Activated CD4-positive, alpha-beta T cell treated with anti-CD3 and anti-CD28 coated beads for 36 hours (primary cell): ENCODE measurements at regions of chr4 and their contacts with region 1.

Region 1: GRCh38 chr4:2745981-2746806 is 9.9 kb downstream of the TNIP2 start:
- DNase-seq: peak; percentile 98
- ATAC-seq: peak; percentile 97
- H3K4me3 Mint-ChIP-seq: peak overlapping the region; percentile 62
- H3K27ac Mint-ChIP-seq: peak overlapping the region; percentile 97
- H3K4me1 Mint-ChIP-seq: peaks cover 58% of the 10 kb centered on the region
- H3K27me3 Mint-ChIP-seq: no peaks in the 10 kb centered on the region

Region 2: GRCh38 chr4:1851575-1852410 is 894.4 kb before region 1 on chr4:
- CTCF ChIA-PET with region 1: no interaction called
- POLR2A ChIA-PET with region 1: no interaction called
- intact Hi-C with region 1: no loop called
- DNase-seq: no peak
- ATAC-seq: no peak
- H3K4me3 Mint-ChIP-seq: no peak overlapping the region
- H3K27ac Mint-ChIP-seq: peak overlapping the region; percentile 19
- H3K4me1 Mint-ChIP-seq: peaks cover 38% of the 10 kb centered on the region
- H3K27me3 Mint-ChIP-seq: no peaks in the 10 kb centered on the region

Region 3: DNA sequence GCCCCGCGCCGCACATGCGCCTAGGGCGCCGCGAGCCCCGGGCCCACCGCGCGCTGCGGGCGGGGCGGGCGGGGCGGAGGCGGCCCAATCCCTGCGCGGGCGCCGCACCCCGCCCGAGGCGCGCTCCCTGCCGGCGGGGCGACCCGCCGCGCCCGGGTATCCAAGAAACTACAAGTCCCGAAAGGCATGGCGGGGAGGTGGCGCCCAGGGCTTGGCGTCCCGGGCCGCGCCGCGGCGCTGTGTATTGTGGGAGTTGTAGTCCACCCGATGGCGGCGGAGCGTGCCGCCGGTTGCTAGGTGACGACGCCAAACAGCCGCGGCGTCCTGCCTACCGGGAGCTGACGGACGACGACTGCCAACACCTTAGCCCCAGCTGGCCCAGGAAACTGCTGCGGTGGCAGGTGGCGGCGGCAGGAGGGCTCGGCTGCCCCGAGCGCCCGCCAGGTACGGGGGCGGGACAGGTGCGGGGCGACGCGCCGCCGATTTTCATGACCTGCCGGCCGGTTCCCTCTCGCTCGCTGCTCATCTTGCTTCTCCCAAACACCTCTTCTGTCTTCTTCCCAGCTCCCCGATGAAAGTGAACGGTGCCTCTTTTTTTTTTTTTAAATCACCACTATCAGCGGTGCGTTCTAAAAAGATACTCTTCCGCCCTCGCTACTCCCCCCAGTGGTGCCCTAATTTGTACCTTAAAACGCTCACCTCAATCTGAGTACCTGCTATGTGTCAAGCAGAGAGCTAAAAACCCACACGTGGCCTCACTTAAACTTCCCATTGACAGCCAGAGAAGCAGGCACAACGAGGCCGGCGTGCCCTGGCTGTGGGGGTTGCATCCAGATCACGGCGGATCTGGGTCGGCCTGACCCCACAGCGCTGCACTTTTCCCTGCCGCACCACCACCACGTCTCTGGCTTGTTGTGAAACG is 327.3 kb before region 1 on chr4 and contains the start of gene CFAP99:
- CTCF ChIA-PET with region 1: no interaction called
- POLR2A ChIA-PET with region 1: no interaction called
- intact Hi-C with region 1: loop called in 1 of 2 experiments (anchors 2 kb)
- DNase-seq: peak; percentile 99
- ATAC-seq: peak; percentile 93
- H3K4me3 Mint-ChIP-seq: peak within 1 kb of the TSS; percentile 82
- H3K27ac Mint-ChIP-seq: peak within 1 kb of the TSS; percentile 68
- H3K4me1 Mint-ChIP-seq: peaks cover 39% of the 10 kb centered on the region
- H3K27me3 Mint-ChIP-seq: peaks cover 27% of the 10 kb centered on the region
- total RNA-seq, gene CFAP99: 0.05 TPM in 1 of 2 experiments, not detected in the other

Region 4: DNA sequence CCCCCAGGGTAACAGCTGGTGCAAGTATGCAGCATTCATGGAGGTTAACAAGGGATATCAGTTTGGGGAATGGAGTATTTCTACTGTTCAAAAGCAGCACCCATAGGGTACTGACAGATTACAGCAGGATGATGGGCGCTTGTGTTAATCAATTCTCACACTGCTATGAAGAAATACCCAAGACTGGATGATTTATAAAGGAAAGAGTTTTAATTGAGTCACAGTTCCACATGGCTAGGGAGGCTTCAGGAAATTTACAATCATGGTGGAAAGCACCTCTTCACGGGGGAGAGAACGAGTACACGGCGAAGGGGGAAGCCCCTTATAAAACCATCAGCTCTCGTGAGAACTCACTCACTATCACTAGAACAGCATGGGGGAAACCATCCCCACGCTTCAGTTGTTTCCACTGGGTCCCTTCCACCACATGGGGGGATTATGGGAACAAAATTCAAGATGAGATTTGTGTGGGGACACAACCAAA is 54.2 kb before region 1 on chr4:
- CTCF ChIA-PET with region 1: no interaction called
- POLR2A ChIA-PET with region 1: interaction called, 7 read pairs
- intact Hi-C with region 1: loop called (anchors 1 kb)
- DNase-seq: peak; percentile 68
- ATAC-seq: peak; percentile 89
- H3K4me3 Mint-ChIP-seq: no peak overlapping the region
- H3K27ac Mint-ChIP-seq: peak overlapping the region; percentile 86
- H3K4me1 Mint-ChIP-seq: peaks cover 31% of the 10 kb centered on the region
- H3K27me3 Mint-ChIP-seq: no peaks in the 10 kb centered on the region

Region 5: DNA sequence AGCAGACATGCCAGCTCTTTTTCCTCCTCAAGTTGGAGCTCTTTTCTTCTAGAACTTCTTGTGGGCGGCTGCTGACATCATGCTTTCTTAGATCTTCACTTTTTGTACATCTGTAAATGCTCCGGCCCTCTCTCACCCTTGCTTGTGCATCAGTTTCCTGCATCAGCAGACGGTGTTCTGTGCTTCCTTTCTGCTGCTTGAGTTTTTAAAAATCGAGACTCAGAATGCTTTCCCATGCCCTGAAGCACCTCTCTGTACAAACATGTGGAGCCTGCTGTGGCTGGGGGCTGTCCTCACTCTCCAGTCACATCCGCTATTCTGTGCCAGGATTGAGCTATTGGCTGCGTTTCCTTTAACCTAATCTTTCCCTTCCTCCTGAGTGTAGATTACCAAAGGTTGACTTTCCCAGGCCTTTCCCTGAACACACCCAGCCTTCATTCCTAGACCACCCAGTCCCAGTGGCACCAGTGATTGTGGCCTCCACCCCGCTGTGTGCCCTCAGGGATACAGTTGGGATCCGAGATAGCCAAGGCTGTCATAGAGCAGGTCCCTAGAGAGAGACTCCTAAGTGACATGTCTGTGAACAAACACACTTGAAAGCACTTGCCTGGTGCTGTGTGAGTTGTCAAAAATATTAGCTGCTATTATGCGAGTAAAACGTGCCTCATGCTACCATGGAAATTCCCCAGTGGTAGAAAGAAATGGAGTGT is 32.0 kb before region 1 on chr4:
- CTCF ChIA-PET with region 1: no interaction called
- POLR2A ChIA-PET with region 1: no interaction called
- intact Hi-C with region 1: loop called in 1 of 2 experiments (anchors 5 kb)
- DNase-seq: peak; percentile 70
- ATAC-seq: peak; percentile 86
- H3K4me3 Mint-ChIP-seq: no peak overlapping the region
- H3K27ac Mint-ChIP-seq: peak overlapping the region; percentile 92
- H3K4me1 Mint-ChIP-seq: peaks cover 32% of the 10 kb centered on the region
- H3K27me3 Mint-ChIP-seq: no peaks in the 10 kb centered on the region

Region 6: DNA sequence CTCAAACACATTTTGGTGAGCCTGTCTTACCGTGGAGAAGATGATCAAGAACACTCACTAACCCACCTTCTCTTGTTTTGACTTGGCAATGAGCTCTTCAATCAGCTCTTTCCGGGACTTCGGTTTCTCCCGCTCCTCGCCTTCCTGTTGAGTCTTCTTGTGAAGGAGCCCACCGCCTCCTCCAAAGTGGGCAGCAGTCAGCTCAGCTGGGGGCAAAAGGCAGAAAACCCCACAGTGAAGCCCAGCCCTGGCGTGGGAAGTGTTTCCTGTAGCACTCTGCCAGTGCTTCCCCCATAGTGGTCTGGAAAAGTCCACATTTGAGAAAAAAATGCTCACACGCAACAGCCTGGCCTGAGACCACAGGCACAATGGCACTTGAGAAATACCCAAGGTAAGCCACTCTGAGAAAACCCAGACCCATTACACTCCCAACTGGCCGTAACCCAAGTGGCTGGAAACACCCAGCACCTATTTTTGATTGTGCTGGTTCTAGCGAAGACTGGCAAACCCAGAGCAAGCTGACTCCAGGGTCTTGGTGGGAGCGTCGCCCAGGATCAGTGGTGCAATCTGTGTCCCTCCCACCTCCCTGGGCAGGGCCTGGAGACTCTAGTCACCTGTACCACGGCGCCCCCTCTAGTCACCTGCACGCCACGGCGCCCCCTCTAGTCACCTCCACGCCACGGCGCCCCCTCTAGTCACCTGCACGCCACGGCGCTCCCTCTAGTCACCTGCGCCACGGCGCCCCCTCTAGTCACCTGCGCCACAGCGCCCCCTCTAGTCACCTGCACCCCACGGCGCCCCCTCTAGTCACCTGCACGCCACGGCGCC is 208.4 kb after region 1 on chr4:
- CTCF ChIA-PET with region 1: interaction called, 6 read pairs
- POLR2A ChIA-PET with region 1: interaction called, 6 read pairs
- intact Hi-C with region 1: loop called (anchors 1 to 5 kb)
- DNase-seq: peak; percentile 88
- ATAC-seq: peak; percentile 83
- H3K4me3 Mint-ChIP-seq: peak overlapping the region; percentile 51
- H3K27ac Mint-ChIP-seq: peak overlapping the region; percentile 90
- H3K4me1 Mint-ChIP-seq: peaks cover 69% of the 10 kb centered on the region
- H3K27me3 Mint-ChIP-seq: no peaks in the 10 kb centered on the region